GM10248 (cell line): ENCODE measurements at regions of chr20 and their contacts with region 1.

Region 1: GRCh38 chr20:31698803-31699718 is 23.6 kb downstream of the BCL2L1 start:
- DNase-seq: peak; percentile 73
- CTCF ChIP-seq: no peak

Region 2: GRCh38 chr20:31523361-31524283 is 175.4 kb before region 1 on chr20:
- CTCF ChIA-PET with region 1: no interaction called
- POLR2A ChIA-PET with region 1: no interaction called
- DNase-seq: no peak
- CTCF ChIP-seq: no peak

Region 3: DNA sequence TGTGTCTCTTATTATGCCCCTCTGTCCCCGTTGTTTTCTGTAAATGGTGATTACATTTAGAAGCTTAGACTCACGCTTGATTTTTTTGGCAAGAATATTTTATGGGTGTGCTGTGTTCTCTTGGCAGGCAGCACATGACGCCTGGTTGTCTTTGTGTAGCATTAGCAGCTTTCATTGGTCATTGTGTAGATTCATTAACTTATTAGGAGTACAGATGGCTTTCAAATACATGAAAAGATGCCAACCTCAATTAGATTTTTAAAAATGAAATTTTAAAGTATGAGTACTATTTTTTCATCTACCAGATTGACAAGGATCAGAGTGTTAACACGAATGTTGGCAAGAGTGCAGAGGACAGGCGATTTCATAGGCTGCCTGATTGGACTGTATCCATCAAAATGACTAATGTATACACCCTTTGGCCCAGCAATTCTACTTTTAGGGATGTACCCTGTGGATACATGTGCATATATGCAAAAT is 46.1 kb before region 1 on chr20:
- CTCF ChIA-PET with region 1: no interaction called
- POLR2A ChIA-PET with region 1: no interaction called
- DNase-seq: no peak
- CTCF ChIP-seq: no peak

Region 4: GRCh38 chr20:31684153-31685015 is 14.7 kb before region 1 on chr20:
- CTCF ChIA-PET with region 1: interaction called, 12 read pairs
- POLR2A ChIA-PET with region 1: interaction called, 4 read pairs
- DNase-seq: no peak
- CTCF ChIP-seq: no peak

Region 5: DNA sequence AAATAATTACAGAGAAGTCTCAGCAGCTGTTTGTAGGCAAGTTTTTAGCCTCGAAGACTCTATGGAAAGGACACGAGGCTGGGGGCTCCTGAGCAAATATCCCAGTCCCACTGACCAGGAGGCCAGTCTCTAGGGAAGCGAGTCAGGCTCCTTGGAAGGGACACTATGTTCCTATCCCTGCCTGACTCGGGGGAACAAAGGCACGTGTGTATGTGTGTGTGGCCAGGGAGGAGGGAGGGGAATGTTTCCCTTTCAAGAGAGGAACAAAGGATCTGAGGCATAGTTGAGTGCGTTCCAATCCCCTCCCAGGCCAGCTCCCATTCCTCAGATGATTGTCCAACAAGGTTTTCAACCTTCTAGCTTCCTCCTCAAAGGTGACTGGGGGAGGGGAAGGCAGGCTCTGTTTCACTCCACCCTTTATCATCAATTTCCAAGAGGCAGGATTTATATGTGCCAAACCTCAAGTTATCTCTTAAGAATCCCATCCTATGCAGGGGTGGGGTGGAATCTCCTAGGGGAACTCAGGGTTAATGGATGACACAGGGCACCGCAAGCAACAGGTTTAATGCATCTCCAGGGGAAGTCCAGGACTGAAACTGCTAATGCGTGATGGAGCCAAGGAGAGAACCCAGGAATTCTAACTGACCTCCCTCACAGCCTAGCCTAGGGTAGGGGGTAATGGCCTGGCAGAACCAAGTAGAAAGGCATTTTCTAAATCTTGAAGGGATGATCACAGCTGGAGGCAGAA is 13.7 kb after region 1 on chr20:
- CTCF ChIA-PET with region 1: interaction called, 17 read pairs
- POLR2A ChIA-PET with region 1: no interaction called
- DNase-seq: no peak
- CTCF ChIP-seq: no peak

Region 6: GRCh38 chr20:31849455-31849925 is 150.4 kb after region 1 on chr20:
- CTCF ChIA-PET with region 1: no interaction called
- POLR2A ChIA-PET with region 1: no interaction called
- DNase-seq: no peak
- CTCF ChIP-seq: no peak